BJ (cell line): ENCODE measurements at regions of chr15 and their contacts with region 1.

Region 1: DNA sequence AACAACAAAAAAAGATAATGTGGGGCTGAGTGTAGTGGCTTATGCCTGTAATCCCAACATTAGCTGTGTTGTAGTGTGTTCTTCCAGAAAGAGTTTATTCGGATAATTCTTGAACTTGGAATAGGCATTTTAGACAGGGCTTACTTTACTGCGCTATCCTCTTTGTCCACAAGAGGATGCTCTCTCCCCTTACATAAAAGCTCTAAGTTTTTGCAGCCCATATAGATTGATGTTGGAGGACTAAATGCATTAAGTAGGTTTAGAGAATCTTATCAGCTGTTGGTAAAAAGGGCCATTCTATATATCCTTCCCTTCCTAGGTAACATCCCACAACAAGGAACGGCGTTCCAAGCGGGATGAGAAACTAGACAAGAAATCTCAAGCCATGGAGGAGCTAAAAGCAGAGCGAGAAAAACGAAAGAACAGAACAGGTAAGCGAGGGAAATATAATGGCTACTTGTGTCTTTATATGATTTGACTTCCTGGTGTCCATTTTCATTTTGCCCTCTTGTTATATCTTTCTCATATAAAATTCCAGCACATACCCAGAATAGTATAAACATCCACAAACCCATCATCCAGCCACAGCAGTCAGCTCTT is 27.8 kb upstream of the ITPKA start:
- DNase-seq: no peak
- H3K4me3 ChIP-seq: no peak overlapping the region
- H3K27me3 ChIP-seq: no peaks in the 10 kb centered on the region
- CTCF ChIP-seq: peak; percentile 96

Region 2: DNA sequence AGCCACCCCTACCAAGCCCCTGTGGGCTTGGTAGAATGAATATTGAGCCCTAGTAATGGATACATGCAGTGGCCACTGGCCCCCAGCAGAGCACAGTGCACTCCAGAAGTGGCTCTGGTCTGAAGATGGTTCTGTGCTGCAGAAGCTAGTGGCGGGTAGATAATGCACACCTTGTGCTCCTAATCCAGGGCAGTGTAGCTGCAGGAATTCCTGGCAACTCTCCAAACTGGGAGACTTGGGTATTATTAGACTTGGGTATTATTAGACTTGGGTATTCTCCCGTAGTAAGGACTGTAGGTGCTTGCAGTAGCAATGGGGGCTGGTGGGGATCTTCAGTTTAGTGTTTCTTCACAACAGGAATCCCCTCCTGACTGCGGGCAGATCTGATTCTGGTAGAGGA is 98.5 kb before region 1 on chr15:
- CTCF ChIA-PET with region 1: no interaction called
- POLR2A ChIA-PET with region 1: no interaction called
- DNase-seq: no peak
- H3K4me3 ChIP-seq: no peak overlapping the region
- H3K27me3 ChIP-seq: no peaks in the 10 kb centered on the region
- CTCF ChIP-seq: no peak

Region 3: DNA sequence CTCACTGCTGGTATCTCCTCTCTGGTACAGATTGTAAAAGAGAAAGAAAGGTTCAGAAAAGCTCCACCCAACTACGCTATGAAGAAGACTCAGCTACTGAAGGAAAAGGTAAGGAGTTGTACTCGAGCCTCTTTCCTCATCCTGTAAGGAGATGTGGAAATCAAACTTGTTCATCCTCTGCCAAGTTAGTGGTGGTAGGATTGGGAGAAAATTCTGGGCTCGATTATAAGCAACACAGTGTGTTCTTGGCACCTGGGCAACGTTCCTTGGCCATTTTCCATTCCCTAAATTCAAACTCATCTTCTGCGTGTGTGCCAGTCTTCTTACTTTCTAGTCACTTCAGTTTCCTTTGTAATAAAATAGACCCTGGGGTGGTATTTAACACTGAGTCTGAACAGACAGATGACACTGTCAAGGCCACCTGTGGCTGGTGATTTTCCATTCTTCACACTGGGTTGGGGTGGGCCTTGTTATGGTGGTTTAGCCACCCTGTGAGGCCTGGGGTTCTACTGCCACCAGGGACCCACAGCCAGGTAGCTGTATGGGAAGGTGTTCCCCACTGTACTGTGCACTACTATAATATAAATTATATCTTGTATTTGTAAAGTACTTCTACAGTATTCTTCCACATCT is 10.6 kb after region 1 on chr15:
- CTCF ChIA-PET with region 1: interaction called, 33 read pairs
- POLR2A ChIA-PET with region 1: no interaction called
- DNase-seq: no peak
- H3K4me3 ChIP-seq: no peak overlapping the region
- H3K27me3 ChIP-seq: no peaks in the 10 kb centered on the region
- CTCF ChIP-seq: no peak

Region 4: DNA sequence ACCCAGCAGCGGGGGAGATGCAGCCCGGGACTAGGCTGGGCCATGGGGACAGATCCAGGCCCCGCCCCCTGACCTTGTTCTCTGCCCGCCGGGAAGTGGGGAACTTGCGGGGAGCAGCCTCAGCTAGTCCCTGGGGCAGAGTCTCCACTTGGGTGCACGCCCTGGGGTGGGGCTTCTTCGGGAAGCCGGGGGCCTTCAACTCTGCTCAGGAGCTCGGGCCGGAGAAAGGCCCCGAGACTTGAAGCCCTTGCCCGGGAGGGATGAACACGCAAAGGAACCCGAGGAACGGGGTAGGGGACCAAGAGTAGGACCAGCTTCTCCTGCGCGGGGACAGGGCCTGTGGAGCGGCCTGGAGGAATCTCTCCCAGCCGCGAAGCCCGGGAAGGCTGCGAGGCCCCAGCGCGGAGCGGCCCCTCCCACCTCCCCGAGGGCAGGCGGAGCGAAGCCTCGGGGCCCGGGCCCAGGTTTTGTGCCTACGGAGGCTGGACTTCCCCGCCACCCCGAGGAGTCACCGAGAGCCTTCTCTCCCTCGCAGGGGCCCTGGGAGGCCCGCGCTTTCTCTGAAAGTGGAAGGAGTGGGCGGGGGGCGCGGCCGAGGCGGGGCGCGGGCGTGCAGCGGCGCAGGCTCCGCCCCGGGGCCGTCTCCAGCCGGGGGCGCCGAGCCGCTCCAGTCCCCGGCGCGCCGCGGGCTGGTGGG is 27.4 kb after region 1 on chr15 and contains the start of gene ITPKA:
- CTCF ChIA-PET with region 1: no interaction called
- POLR2A ChIA-PET with region 1: no interaction called
- DNase-seq: no peak
- H3K4me3 ChIP-seq: peak within 1 kb of the TSS; percentile 57
- H3K27me3 ChIP-seq: peaks cover 7% of the 10 kb centered on the region
- CTCF ChIP-seq: no peak
- polyA plus RNA-seq, gene ITPKA: 0.44 and 0.59 TPM in 2 replicates